H1 (cell line): ENCODE measurements at regions of chr15 and their contacts with region 1.

Region 1: DNA sequence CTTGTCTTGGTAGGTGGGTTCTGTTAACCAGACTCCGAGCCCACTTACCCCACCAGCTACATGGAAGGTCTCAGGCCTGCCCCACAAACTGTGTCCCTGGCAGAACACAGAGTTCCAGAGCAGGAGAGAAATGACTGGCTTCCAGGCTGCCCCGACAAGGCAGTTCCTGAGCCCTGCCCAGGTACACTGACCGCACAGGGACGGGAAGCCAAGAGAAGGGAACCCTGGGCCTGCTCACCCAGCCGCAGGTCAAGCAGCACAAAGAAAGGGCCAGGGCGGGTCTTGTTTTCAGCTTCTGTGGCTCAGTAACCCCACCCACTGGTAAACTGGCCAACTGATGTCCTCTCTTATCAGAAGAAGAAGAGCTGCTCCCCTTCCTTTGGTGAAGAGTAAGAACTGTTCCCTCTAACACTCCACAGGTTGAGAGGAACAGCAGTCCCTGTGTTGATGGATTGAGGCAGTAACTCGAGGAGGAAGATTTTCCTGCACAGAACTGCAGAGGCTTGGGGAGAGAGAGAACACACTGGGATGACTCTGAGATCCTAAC is 68.4 kb downstream of the CRTC3 start:
- DNase-seq: no peak
- H3K4me3 ChIP-seq: no peak overlapping the region
- H3K27ac ChIP-seq: no peak overlapping the region
- H3K4me1 ChIP-seq: peaks cover 0 to 6% (median 4%) of the 10 kb centered on the region in 4 experiments; a peak in 6 of 7 replicates
- H3K27me3 ChIP-seq: no peaks in the 10 kb centered on the region
- CTCF ChIP-seq: peak in 1 of 3 experiments; percentile 44; a peak in 2 of 4 replicates
- EP300 ChIP-seq: no peak
- POLR2A ChIP-seq: no peak
- RAD21 ChIP-seq: peak; percentile 55 to 63

Region 2: DNA sequence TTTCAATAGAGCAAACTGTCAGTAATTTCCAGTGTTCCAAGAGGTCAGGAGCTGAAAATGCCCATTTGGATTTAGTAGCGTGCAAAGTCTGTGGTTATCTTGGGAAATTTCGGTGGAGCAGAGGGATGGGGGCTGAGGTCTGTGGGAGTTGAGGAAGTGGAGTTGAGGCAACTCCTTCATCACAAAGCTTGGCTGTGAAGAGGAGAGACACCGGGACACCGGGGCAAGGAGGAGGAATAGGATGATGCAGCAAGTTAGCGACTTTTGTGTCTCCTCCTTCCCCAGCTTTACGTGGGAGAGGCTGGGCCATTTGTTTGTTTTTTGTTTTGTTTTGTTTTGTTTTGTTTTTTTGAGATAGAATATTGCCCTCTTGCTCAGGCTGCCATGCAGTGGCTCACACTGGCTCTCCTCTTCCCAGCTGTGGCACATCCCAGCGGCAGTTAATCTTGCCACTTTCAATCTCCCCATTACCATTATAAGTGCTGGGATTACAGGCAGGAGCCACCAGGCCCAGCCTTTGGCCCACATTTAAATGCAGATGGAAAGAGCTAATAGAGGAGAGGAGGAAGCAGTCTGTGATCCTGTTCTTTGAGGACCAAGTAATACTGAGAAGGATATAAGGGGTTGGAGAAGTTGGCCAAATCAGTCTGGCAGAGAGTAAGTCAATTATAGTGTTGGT is 21.3 kb before region 1 on chr15:
- CTCF ChIA-PET with region 1: interaction called, 12 read pairs
- POLR2A ChIA-PET with region 1: no interaction called
- DNase-seq: no peak
- H3K4me3 ChIP-seq: no peak overlapping the region
- H3K27ac ChIP-seq: no peak overlapping the region
- H3K4me1 ChIP-seq: peaks cover 2 to 12% (median 8%) of the 10 kb centered on the region in 4 experiments; a peak in 6 of 7 replicates
- H3K27me3 ChIP-seq: no peaks in the 10 kb centered on the region
- CTCF ChIP-seq: no peak
- EP300 ChIP-seq: no peak
- POLR2A ChIP-seq: no peak
- RAD21 ChIP-seq: no peak

Region 3: DNA sequence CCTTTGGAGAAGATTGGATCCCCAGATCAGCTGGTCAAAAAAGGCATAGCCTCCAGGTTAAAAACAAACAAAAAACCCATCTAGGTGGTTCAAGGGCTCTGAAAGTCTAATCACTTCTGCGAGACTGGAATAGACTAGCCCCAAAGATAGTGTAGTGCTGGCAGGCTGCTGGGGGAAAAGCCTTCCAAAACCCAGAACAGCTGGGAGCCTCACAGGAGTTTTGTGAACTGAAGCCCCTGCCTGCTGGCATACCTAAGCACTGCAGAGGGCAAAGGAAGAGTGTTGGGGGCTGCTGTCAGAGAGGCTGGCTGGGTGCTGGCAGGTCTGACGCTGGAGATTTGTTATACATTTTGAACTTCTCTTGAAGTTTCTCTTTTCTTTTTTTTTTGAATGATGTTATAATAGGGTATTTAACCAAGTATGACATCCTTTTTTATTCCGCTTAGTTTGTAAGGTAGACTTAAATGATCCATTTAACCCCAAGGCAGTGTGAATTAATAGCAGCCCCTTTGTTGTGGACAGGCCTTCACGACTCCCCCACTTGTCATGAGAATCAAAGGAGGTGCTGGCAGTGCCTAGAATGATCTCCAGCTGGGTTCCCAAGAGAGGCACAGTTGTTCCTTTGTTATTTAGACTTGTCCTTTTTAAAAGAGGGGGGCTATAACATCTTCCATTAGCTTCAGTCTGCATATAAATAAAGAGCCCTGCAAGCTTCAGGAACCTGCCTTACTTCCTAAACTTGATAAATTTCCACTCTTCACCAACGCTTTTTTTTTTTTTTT is 14.4 kb before region 1 on chr15:
- CTCF ChIA-PET with region 1: interaction called, 22 read pairs
- POLR2A ChIA-PET with region 1: no interaction called
- DNase-seq: peak; percentile 57 to 78
- H3K4me3 ChIP-seq: peak overlapping the region in 3 of 4 experiments; percentile 7 to 36 (median 11); a peak in 4 of 8 replicates
- H3K27ac ChIP-seq: no peak overlapping the region
- H3K4me1 ChIP-seq: peaks cover 10 to 20% (median 11%) of the 10 kb centered on the region in 4 experiments
- H3K27me3 ChIP-seq: peaks cover 0 to 3% (median 2%) of the 10 kb centered on the region in 4 experiments; a peak in 3 of 7 replicates
- CTCF ChIP-seq: no peak
- EP300 ChIP-seq: no peak
- POLR2A ChIP-seq: no peak
- RAD21 ChIP-seq: peak in 1 of 2 experiments; percentile 18; a peak in 1 of 4 replicates

Region 4: DNA sequence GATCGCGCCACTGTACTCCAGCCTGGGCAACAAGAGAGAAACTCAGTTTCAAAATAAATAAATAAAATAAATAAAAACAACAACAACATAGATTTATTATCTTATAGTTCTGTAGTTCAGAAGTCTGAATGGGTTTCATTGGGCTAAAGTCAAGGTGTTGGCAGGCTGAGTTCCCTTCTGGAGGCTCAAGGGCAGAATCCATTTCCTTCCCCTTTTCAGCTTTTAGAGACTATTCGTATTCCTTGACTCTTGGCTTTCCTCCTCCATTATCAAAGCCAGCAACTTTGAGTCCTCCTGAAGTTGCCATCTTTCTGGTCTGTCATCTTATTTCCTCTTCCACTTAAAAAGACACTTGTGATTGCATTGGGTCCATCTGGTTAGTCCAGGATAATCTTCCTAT is 131.2 kb after region 1 on chr15:
- CTCF ChIA-PET with region 1: no interaction called
- POLR2A ChIA-PET with region 1: no interaction called
- DNase-seq: no peak
- H3K4me3 ChIP-seq: no peak overlapping the region
- H3K27ac ChIP-seq: no peak overlapping the region
- H3K4me1 ChIP-seq: no peaks in the 10 kb centered on the region
- H3K27me3 ChIP-seq: no peaks in the 10 kb centered on the region
- CTCF ChIP-seq: no peak
- EP300 ChIP-seq: no peak
- POLR2A ChIP-seq: no peak
- RAD21 ChIP-seq: no peak